Aorta (tissue), 5 donors: ENCODE measurements at regions of chr1 and their contacts with region 1.

Region 1: DNA sequence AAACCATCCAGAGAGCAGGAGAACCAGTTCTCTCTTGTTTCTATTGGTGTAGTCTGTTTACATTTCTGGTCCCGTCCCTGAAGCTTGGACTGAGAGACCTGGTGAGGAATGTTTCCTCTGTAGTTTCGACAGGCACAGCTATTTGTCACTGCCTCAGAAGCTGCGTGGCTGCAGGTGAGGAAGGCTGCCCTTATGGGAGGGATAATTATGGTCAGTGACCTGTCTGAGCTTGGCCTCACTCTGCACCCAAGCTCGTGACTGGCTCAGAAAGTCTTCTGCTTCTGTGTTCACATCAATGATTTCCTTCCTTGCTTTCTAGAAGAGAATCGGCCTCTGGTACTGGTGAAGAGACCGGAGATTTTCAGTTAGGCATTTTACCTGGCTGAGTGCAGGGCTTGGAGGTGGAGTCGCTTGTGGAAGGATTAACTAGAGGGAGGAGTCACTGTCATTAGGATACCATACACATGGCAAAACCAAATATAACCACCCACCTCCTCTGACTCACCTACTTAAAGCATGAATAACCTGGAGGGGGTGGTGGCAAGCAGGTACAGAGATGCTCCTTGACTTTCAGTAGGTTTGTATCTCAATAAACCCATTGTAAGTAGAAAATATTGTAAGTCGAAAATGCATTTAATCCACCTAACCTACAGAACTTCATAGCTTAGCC is 19.9 kb upstream of the WDR26 start:
- DNase-seq: no peak
- ATAC-seq: no peak
- H3K4me3 ChIP-seq: no peak overlapping the region
- H3K27ac ChIP-seq: no peak overlapping the region
- H3K4me1 ChIP-seq: no peaks in the 10 kb centered on the region
- H3K27me3 ChIP-seq: no peaks in the 10 kb centered on the region

Region 2: DNA sequence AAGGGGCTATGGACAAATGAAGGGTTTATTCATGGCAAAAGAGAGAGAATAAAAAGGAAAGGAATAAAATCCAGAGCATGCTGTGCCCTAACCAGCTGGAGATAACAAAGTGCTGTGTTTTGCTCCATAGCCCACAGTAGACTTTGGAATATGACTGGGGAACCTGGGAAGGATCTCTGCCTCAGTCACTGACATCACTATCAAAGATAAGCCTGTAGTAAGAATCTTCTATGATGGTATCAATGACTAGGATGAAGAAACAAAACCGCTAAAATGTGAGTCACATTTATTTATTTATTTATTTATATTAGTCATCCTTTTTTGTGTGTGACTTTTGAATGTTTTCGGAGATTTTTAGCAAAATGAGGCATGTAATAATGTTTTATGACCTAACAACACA is 180.9 kb before region 1 on chr1:
- intact Hi-C with region 1: no loop called
- DNase-seq: no peak
- ATAC-seq: no peak
- H3K4me3 ChIP-seq: no peak overlapping the region
- H3K27ac ChIP-seq: no peak overlapping the region
- H3K4me1 ChIP-seq: no peaks in the 10 kb centered on the region
- H3K27me3 ChIP-seq: no peaks in the 10 kb centered on the region

Region 3: DNA sequence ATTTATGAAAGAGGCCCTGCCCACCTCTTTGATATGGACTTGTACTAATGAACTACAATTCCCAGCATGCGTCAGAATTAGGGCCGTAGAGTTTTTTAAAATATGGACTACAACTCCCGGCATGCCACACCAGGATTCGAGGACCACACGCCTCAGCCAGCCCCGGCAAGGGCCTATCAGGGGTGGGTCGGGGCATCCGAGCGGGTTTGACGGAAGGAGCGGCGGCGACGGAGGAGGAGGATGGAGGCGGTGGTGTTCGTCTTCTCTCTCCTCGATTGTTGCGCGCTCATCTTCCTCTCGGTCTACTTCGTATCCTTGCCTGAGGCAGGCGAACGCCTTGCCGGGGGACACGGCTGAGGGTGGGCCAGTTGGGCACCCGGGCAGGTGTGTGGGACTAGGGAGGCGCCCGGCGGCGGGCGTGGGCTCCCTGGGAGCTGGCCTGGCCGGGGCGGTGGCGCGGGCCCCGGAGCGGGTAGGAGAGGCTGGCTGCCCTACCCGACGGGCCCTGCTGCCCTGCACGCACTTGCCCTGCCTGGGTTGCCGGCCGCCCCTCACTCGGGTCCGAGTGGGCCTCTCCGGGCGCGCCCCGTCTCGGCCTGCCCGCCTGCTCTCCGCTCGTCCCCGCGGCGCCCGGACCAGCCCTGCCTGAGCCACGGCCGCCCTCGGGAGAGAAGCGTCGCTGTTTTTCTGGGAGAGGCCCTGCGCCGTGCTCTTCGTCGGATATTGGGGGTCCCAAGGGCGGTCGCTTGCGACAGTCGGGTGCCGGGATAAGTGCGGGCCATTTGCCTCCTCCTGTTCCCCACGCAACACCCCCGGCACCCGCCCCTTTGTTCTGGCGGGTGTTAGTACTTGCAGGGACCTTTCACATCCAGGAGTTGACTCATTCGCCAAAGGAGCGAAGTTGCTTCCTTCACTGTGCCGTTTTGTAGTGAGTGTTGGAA is 97.6 kb before region 1 on chr1 and contains the start of gene CNIH4:
- intact Hi-C with region 1: loop called in 1 of 2 experiments (anchors 5 kb)
- DNase-seq: peak; percentile 95
- ATAC-seq: peak; percentile 99
- H3K4me3 ChIP-seq: peak within 1 kb of the TSS; percentile 61 to 85
- H3K27ac ChIP-seq: peak within 1 kb of the TSS; percentile 47 to 68
- H3K4me1 ChIP-seq: peaks cover 0 to 4% of the 10 kb centered on the region in 2 donors
- H3K27me3 ChIP-seq: no peaks in the 10 kb centered on the region
- total RNA-seq, gene CNIH4: 45.3 to 45.6 TPM

Region 4: DNA sequence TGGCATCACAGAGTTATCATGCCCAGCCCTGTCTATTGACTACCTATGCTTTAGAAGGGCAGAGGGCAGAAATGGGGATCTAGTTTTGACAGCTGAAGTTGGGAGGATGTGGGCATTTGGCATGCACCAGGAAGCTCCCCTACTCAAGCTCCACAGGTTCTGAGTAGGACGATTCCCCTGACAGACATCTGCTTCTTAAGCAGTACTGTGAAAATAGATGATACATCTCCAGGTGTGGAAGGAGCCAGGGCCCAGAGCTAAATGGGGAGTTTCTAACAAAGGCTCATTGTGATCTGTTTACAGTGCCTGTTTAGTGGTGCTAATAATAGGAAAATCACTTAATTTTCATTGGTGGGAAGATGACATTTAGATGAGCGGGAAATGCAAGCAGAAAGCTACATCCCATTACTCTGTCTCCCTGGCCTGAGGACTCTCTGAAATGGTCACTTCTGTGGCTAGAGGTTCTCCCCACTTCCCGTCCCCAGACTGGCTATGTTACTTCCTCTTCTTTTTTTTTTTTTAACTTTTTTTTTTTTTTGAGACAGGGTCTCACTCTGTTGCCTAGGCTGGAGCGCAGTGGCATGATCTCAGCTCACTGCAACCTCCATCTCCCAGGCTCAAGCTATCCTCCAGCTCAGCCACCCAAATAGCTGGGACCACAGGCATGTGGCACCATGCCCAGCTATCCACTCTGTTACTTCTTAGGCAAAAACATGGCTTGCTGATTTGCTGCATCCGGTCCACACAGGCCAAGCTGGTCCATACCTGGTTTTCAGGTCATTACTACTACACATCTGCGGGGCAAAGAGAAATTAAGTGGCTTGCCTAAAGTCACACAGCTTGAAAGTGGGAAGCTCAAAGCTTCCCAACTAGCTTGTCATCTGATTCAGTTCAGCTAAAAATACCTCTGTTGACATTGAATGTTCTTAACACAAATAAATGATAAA is 138.4 kb after region 1 on chr1:
- intact Hi-C with region 1: no loop called
- DNase-seq: no peak
- ATAC-seq: no peak
- H3K4me3 ChIP-seq: no peak overlapping the region
- H3K27ac ChIP-seq: no peak overlapping the region
- H3K4me1 ChIP-seq: no peaks in the 10 kb centered on the region
- H3K27me3 ChIP-seq: no peaks in the 10 kb centered on the region